ENCODE measurements at regions of chr1 and their contacts with region 1.

Region 1: DNA sequence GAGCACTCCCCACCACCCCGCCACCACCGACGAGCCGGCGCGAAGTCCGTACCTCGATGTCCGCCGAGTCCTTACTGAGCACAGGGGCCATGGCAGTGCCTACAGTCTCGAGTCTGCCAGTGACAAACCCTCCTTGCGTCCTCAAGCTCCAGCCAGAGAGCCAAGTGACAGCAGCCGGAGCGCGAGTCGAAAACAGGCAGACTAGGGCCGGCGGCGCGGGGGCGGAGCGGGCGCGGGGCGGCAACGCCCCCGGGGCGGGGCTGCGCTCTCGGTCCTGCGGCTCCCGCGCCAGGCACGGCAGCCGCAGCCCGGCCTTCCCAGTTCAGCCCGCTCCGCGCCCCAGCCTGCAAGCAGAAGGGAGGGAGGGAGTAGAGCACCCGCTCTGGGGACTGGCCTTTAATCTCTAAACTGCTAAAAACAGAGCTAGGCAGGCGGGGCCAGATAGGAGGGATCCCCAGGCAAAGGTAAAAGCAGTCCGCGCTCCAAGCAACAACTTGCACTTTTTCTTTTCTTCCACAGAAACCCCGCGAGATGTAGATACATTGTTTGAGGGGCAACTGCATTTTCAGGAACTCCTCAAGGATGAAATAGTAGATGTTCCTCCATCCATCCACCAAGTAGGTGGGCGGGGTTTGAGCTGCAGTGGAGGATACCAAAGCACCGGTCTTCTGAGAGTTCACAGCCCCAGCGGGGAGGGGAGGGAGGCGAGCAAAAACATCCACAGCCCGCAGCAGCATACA is at the start of gene DPYD:
- DNase-seq: peak; percentile 46 to 87
- ATAC-seq: peak; percentile 96 to 97
- H3K4me3 ChIP-seq: peak within 1 kb of the TSS; percentile 91
- H3K27ac ChIP-seq: peak within 1 kb of the TSS; percentile 69 to 88
- H3K4me1 ChIP-seq: peaks cover 15% of the 10 kb centered on the region
- CTCF ChIP-seq: no peak
- EP300 ChIP-seq: no peak
- POLR2A ChIP-seq: no peak; the same call in 1 of the 2 replicates
- RAD21 ChIP-seq: peak in 1 of 2 experiments; percentile 12; a peak in 3 of 5 replicates
- polyA plus RNA-seq, gene DPYD: 6.9 and 7.5 TPM in 2 replicates

Region 2: DNA sequence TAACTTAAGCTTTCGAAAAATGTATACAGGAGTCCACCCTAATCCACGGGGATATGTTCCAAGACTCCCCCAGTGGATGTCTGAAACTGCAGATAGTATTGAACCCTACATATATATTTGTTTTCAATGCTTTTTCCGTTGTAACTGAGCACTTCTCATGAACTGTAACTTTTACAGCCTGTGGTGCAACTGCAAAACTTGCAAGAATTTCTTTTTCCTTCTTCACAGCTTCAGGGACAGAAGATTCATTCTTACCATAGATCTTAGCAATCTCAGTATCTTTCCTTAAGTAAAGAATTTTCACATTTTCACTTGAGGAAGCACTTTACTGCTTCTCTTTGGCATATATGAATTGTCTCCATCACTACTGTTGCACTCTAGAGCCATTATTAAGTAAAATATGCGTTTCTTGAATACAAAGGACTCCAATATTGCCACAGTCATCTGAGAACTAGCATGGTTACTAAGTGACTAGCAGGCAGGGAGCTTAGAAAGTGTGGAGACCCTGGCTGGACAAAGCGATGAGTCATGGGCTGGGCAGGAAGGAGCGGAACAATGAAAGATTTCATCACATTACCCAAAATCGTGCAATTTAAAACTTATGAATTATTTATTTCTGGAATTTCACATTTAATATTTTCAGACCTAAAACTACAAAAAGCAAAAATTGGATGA is 14.3 kb before region 1 on chr1:
- CTCF ChIA-PET with region 1: no interaction called
- POLR2A ChIA-PET with region 1: interaction called, 10 read pairs
- DNase-seq: peak; percentile 5 to 74
- ATAC-seq: peak; percentile 95 to 97
- H3K4me3 ChIP-seq: peak overlapping the region; percentile 22; the same call in 1 of the 3 replicates
- H3K27ac ChIP-seq: peak overlapping the region; percentile 88 to 90
- H3K4me1 ChIP-seq: peaks cover 28% of the 10 kb centered on the region
- CTCF ChIP-seq: no peak
- EP300 ChIP-seq: no peak
- POLR2A ChIP-seq: no peak
- RAD21 ChIP-seq: no peak

Region 3: GRCh38 chr1:97976801-97977200 is 55.8 kb after region 1 on chr1:
- CTCF ChIA-PET with region 1: no interaction called
- POLR2A ChIA-PET with region 1: no interaction called
- DNase-seq: no peak
- ATAC-seq: no peak
- H3K4me3 ChIP-seq: no peak overlapping the region
- H3K27ac ChIP-seq: no peak overlapping the region
- H3K4me1 ChIP-seq: no peaks in the 10 kb centered on the region
- CTCF ChIP-seq: no peak
- EP300 ChIP-seq: no peak
- POLR2A ChIP-seq: no peak
- RAD21 ChIP-seq: no peak

Region 4: GRCh38 chr1:98027044-98027443 is 106.0 kb after region 1 on chr1:
- CTCF ChIA-PET with region 1: no interaction called
- POLR2A ChIA-PET with region 1: interaction called, 10 read pairs
- DNase-seq: no peak
- ATAC-seq: peak; percentile 55 to 65
- H3K4me3 ChIP-seq: peak overlapping the region; percentile 27; the same call in 2 of the 3 replicates
- H3K27ac ChIP-seq: peak overlapping the region; percentile 85 to 88
- H3K4me1 ChIP-seq: peaks cover 44% of the 10 kb centered on the region
- CTCF ChIP-seq: no peak
- EP300 ChIP-seq: no peak
- POLR2A ChIP-seq: no peak
- RAD21 ChIP-seq: no peak